ENCODE measurements at regions of chr19 and their contacts with region 1.

Region 1: GRCh38 chr19:41439441-41440222 is at the start of gene DMAC2:
- DNase-seq: peak; percentile 95 to 99 (median 97)
- ATAC-seq: peak; percentile 98
- H3K4me3 ChIP-seq: peak within 1 kb of the TSS; percentile 72
- H3K27ac ChIP-seq: peak within 1 kb of the TSS; percentile 95
- H3K4me1 ChIP-seq: peaks cover 6 to 23% of the 10 kb centered on the region in 2 experiments; a peak in 4 of 5 replicates
- H3K27me3 ChIP-seq: peaks cover 0 to 5% of the 10 kb centered on the region in 2 experiments; a peak in 2 of 5 replicates
- CTCF ChIP-seq: peak; percentile 79 to 85 (median 84)
- EP300 ChIP-seq: peak; percentile 62; the same call in 1 of the 2 replicates
- POLR2A ChIP-seq: peak; percentile 99
- RAD21 ChIP-seq: peak; percentile 37 to 57; a peak in 3 of 4 replicates
- polyA plus RNA-seq, gene DMAC2: 12.9 to 20.2 TPM

Region 2: GRCh38 chr19:41206926-41207750 is 232.5 kb before region 1 on chr19:
- CTCF ChIA-PET with region 1: no interaction called
- POLR2A ChIA-PET with region 1: no interaction called
- in situ Hi-C with region 1: no loop called
- intact Hi-C with region 1: loop called (anchors 10 kb)
- DNase-seq: peak; percentile 77 to 86 (median 84)
- ATAC-seq: peak; percentile 92
- H3K4me3 ChIP-seq: no peak overlapping the region
- H3K27ac ChIP-seq: peak overlapping the region; percentile 52
- H3K4me1 ChIP-seq: peaks cover 10 to 15% of the 10 kb centered on the region in 2 experiments; a peak in 4 of 5 replicates
- H3K27me3 ChIP-seq: peaks cover 0 to 4% of the 10 kb centered on the region in 2 experiments; a peak in 2 of 5 replicates
- CTCF ChIP-seq: no peak
- EP300 ChIP-seq: no peak
- POLR2A ChIP-seq: no peak; the same call in 1 of the 2 replicates
- RAD21 ChIP-seq: no peak

Region 3: DNA sequence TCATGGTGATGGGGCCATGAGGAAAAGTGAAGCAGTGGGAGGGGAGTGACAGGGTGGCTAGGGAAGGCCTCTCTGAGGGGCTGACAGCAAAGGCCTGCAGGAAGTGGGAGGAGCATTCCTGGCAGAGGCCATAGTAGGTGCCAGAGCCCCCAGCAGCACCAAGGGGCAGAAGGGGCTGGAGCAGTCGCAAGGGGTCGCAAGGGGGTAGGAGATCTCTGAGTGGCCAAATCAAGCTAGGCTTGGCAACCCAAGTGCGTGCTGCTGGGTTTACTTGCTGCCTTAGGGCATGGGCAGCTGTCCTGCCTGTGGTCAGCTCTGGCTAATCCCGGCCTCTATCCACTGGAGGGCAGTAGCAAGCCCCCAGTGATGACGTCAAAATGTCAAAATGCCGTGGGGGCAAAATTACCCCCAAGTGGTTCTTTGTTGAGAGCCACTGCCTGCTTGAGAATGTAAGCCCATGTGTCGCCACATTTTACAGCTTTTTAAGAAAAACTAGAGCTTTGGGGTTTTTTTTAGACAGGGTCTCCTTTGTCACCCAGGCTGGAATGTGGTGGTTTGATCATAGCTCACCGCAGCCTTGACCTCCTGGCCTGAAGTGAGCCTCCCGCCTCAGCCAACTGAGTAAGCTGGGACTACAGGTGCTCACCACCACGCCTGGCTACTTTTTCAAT is 117.9 kb before region 1 on chr19:
- CTCF ChIA-PET with region 1: no interaction called
- POLR2A ChIA-PET with region 1: no interaction called
- in situ Hi-C with region 1: no loop called
- intact Hi-C with region 1: loop called (anchors 5 kb)
- DNase-seq: peak; percentile 65 to 77 (median 68)
- ATAC-seq: peak; percentile 43
- H3K4me3 ChIP-seq: no peak overlapping the region
- H3K27ac ChIP-seq: peak overlapping the region; percentile 95; the same call in 1 of the 3 replicates
- H3K4me1 ChIP-seq: peaks cover 52 to 63% of the 10 kb centered on the region in 2 experiments
- H3K27me3 ChIP-seq: no peaks in the 10 kb centered on the region
- CTCF ChIP-seq: peak; percentile 78 to 88 (median 79)
- EP300 ChIP-seq: no peak
- POLR2A ChIP-seq: peak; percentile 23; the same call in 1 of the 2 replicates
- RAD21 ChIP-seq: peak; percentile 13 to 61; a peak in 3 of 4 replicates

Region 4: GRCh38 chr19:41363753-41364523 is 75.7 kb before region 1 on chr19 and contains the start of gene B9D2:
- CTCF ChIA-PET with region 1: no interaction called
- POLR2A ChIA-PET with region 1: no interaction called
- in situ Hi-C with region 1: no loop called
- intact Hi-C with region 1: loop called (anchors 10 kb)
- DNase-seq: peak; percentile 97 to 99 (median 98)
- ATAC-seq: peak; percentile 94
- H3K4me3 ChIP-seq: peak within 1 kb of the TSS; percentile 80
- H3K27ac ChIP-seq: peak within 1 kb of the TSS; percentile 100
- H3K4me1 ChIP-seq: peaks cover 30 to 46% of the 10 kb centered on the region in 2 experiments
- H3K27me3 ChIP-seq: no peaks in the 10 kb centered on the region
- CTCF ChIP-seq: peak in 1 of 3 experiments; percentile 6; a peak in 1 of 6 replicates
- EP300 ChIP-seq: no peak
- POLR2A ChIP-seq: peak; percentile 93
- RAD21 ChIP-seq: 0 out of 4 replicates have a peak, but pooled peaks of 1 of the 2 experiments have one; percentile 10
- polyA plus RNA-seq, gene B9D2: 0.83 to 1.4 TPM

Region 5: GRCh38 chr19:41426952-41427646 is 12.5 kb before region 1 on chr19 and contains the start of gene B3GNT8:
- CTCF ChIA-PET with region 1: no interaction called
- POLR2A ChIA-PET with region 1: interaction called, 15 read pairs
- in situ Hi-C with region 1: no loop called
- intact Hi-C with region 1: no loop called
- DNase-seq: peak; percentile 92 to 94 (median 94)
- ATAC-seq: peak; percentile 96
- H3K4me3 ChIP-seq: peak within 1 kb of the TSS; percentile 35
- H3K27ac ChIP-seq: peak within 1 kb of the TSS; percentile 79
- H3K4me1 ChIP-seq: peaks cover 23 to 56% of the 10 kb centered on the region in 2 experiments
- H3K27me3 ChIP-seq: no peaks in the 10 kb centered on the region
- CTCF ChIP-seq: no peak
- EP300 ChIP-seq: no peak
- POLR2A ChIP-seq: peak; percentile 51
- RAD21 ChIP-seq: no peak
- polyA plus RNA-seq, gene B3GNT8: 0.11 TPM in 1 of 2 experiments, not detected in the other

Region 6: GRCh38 chr19:41588497-41589209 is 149.0 kb after region 1 on chr19:
- CTCF ChIA-PET with region 1: no interaction called
- POLR2A ChIA-PET with region 1: no interaction called
- in situ Hi-C with region 1: no loop called
- intact Hi-C with region 1: no loop called
- DNase-seq: peak; percentile 29 to 43 (median 38)
- ATAC-seq: peak; percentile 69; the same call in 2 of the 3 replicates
- H3K4me3 ChIP-seq: no peak overlapping the region
- H3K27ac ChIP-seq: no peak overlapping the region
- H3K4me1 ChIP-seq: no peaks in the 10 kb centered on the region
- H3K27me3 ChIP-seq: no peaks in the 10 kb centered on the region
- CTCF ChIP-seq: no peak
- EP300 ChIP-seq: no peak
- POLR2A ChIP-seq: no peak
- RAD21 ChIP-seq: no peak

Measured in K562 (cell line).